B cell (primary cell): ENCODE measurements at regions of chr10 and their contacts with region 1.

Region 1: GRCh38 chr10:5840314-5841307 is 27.4 kb upstream of the GDI2 start:
- DNase-seq: peak; percentile 92
- ATAC-seq: peak; percentile 82
- H3K4me3 ChIP-seq: peak overlapping the region in 4 of 5 experiments; percentile 55 to 63 (median 58)
- H3K4me3 Mint-ChIP-seq: peak overlapping the region; percentile 94
- H3K27ac ChIP-seq: peak overlapping the region; percentile 99 to 100
- H3K27ac Mint-ChIP-seq: peak overlapping the region; percentile 100
- H3K4me1 ChIP-seq: peaks cover 68 to 77% of the 10 kb centered on the region in 2 donors
- H3K4me1 Mint-ChIP-seq: peaks cover 70% of the 10 kb centered on the region
- H3K27me3 ChIP-seq: no peaks in the 10 kb centered on the region
- H3K27me3 Mint-ChIP-seq: no peaks in the 10 kb centered on the region
- CTCF ChIP-seq: no peak

Region 2: DNA sequence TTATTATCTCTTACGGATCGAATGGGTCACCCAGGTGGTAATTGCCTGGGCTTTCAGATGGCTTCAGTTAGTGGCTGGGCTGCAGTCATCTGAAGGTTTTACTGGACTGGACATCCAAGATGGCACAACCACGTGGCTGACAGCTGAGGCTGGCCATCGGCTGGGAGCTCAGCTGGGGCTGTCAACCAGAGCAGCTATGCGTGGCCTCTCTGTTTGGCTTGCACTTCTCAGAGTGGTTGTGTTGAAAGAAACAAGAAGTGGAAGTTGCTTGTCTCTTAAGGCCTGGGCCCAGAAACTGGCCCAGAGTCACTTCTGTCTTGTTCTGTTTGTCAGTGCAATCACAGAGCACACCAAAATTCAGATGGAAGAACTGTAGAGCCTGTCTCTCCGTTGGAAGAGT is 21.7 kb before region 1 on chr10:
- CTCF ChIA-PET with region 1: interaction called, 25 read pairs
- POLR2A ChIA-PET with region 1: interaction called, 35 read pairs
- intact Hi-C with region 1: no loop called
- DNase-seq: peak; percentile 72
- ATAC-seq: peak; percentile 54
- H3K4me3 ChIP-seq: peak overlapping the region in 1 of 5 experiments; percentile 4
- H3K4me3 Mint-ChIP-seq: peak overlapping the region; percentile 78
- H3K27ac ChIP-seq: peak overlapping the region; percentile 89 to 94
- H3K27ac Mint-ChIP-seq: peak overlapping the region; percentile 98
- H3K4me1 ChIP-seq: peaks cover 65 to 77% of the 10 kb centered on the region in 2 donors
- H3K4me1 Mint-ChIP-seq: peaks cover 64% of the 10 kb centered on the region
- H3K27me3 ChIP-seq: no peaks in the 10 kb centered on the region
- H3K27me3 Mint-ChIP-seq: no peaks in the 10 kb centered on the region
- CTCF ChIP-seq: no peak

Region 3: GRCh38 chr10:5854106-5854570 is 13.5 kb after region 1 on chr10:
- CTCF ChIA-PET with region 1: interaction called, 29 read pairs
- POLR2A ChIA-PET with region 1: interaction called, 28 read pairs
- intact Hi-C with region 1: loop called (anchors 1 kb)
- DNase-seq: no peak
- ATAC-seq: no peak
- H3K4me3 ChIP-seq: no peak overlapping the region
- H3K4me3 Mint-ChIP-seq: no peak overlapping the region
- H3K27ac ChIP-seq: no peak overlapping the region
- H3K27ac Mint-ChIP-seq: no peak overlapping the region
- H3K4me1 ChIP-seq: peaks cover 19 to 52% of the 10 kb centered on the region in 2 donors
- H3K4me1 Mint-ChIP-seq: peaks cover 37% of the 10 kb centered on the region
- H3K27me3 ChIP-seq: no peaks in the 10 kb centered on the region
- H3K27me3 Mint-ChIP-seq: no peaks in the 10 kb centered on the region
- CTCF ChIP-seq: no peak

Region 4: GRCh38 chr10:5889624-5890451 is 49.2 kb after region 1 on chr10 and contains the starts of genes ANKRD16 and FBH1:
- CTCF ChIA-PET with region 1: interaction called, 3 read pairs
- POLR2A ChIA-PET with region 1: interaction called, 17 read pairs
- intact Hi-C with region 1: loop called (anchors 1 kb)
- DNase-seq: peak; percentile 99
- ATAC-seq: peak; percentile 84
- H3K4me3 ChIP-seq: peak within 1 kb of the TSS; percentile 51 to 88 (median 77)
- H3K4me3 Mint-ChIP-seq: peak within 1 kb of the TSS; percentile 94
- H3K27ac ChIP-seq: peak within 1 kb of the TSS; percentile 48 to 77
- H3K27ac Mint-ChIP-seq: peak within 1 kb of the TSS; percentile 88
- H3K4me1 ChIP-seq: peaks cover 28 to 33% of the 10 kb centered on the region in 2 donors
- H3K4me1 Mint-ChIP-seq: peaks cover 58% of the 10 kb centered on the region
- H3K27me3 ChIP-seq: no peaks in the 10 kb centered on the region
- H3K27me3 Mint-ChIP-seq: no peaks in the 10 kb centered on the region
- CTCF ChIP-seq: no peak
- total RNA-seq, gene ANKRD16: 12.6 and 13.1 TPM in 2 replicates
- total RNA-seq, gene FBH1: 129 and 138 TPM in 2 replicates